ENCODE measurements at regions of chr19 and their contacts with region 1.

Region 1: DNA sequence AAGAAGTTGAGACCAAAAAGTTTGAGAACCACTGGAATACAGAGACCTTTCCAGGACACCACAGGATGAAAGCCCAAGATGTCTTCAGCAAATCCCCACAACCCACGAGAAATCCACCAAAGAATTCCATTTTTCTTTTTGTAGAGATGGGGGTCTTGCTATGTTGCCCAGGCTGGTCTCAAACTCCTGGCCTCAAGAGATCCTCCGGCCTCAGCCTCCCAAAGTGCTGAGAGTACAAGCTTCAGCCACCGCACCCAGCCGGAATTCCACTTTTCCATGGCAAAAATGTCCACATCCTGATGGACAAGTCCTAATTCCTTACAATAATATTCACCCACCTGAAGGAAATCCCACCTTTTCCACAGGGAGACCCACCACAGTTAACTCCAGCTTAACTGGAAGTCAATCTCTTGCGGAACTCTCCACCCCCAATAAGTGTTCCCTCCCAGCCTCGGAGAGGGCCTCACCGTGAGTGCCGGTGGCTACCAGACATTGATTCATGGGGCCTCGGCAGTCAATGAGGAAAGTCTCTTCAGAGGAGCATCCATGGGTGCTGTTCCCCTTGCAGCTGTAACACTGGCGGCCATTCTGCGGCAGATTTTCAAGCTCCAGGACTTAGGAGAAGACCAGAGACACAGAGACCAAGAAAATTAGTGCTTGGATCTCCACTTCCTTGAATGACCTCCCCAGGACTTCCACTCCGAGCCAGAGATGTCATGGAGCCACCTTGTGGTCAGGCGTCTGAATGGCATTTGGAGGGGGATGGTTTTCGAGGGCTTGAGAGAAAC is 12.3 kb upstream of the CADM4 start:
- DNase-seq: peak; percentile 80 to 84
- ATAC-seq: peak; percentile 82 to 91
- H3K4me3 ChIP-seq: no peak overlapping the region
- H3K27ac ChIP-seq: no peak overlapping the region
- H3K4me1 ChIP-seq: no peaks in the 10 kb centered on the region
- CTCF ChIP-seq: peak; percentile 78
- EP300 ChIP-seq: no peak
- POLR2A ChIP-seq: no peak
- RAD21 ChIP-seq: peak; percentile 73 to 81

Region 2: DNA sequence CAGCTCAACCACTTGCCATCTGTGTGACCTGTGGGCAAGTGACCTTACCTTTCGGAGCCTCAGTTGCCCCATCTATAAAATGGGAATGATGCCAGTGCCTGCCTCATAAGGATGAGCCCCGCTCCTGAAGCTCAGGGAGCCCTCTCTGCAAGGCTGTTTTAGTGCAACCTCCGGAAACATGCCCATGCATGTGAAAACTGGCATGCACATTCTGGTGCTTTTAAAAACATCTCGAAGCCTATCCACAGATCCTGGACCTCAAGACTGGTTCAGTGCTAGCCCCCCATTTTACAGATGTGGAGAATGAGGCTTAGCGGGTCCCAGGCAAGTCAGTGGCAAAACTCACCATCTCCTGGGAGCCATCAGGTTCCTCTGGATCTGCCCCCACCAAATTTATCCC is 17.9 kb before region 1 on chr19:
- CTCF ChIA-PET with region 1: interaction called, 11 read pairs
- POLR2A ChIA-PET with region 1: interaction called, 6 read pairs
- DNase-seq: no peak
- ATAC-seq: no peak
- H3K4me3 ChIP-seq: no peak overlapping the region
- H3K27ac ChIP-seq: peak overlapping the region in 1 of 2 experiments; percentile 68; a peak in 2 of 6 replicates
- H3K4me1 ChIP-seq: peaks cover 24% of the 10 kb centered on the region
- CTCF ChIP-seq: no peak
- EP300 ChIP-seq: no peak
- POLR2A ChIP-seq: no peak
- RAD21 ChIP-seq: no peak

Region 3: DNA sequence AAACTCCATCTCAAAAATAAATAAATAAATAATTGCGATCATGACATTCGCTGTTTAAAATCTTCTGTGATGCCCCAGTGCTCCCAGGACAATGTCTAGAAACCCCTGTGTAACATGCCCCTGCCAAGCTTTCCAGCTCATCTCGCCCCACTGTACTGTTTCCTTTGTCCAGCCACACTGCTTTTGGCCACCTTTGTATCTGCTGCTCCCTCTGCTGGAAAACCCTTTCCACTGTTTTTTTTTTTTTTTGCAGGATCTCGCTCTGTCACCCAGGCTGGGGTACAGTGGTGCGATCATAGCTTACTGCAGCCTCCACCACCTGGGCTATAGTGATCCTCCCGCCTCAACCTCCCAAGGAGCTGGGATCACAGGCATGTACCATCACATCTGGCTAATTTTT is 10.5 kb after region 1 on chr19:
- CTCF ChIA-PET with region 1: interaction called, 22 read pairs
- POLR2A ChIA-PET with region 1: no interaction called
- DNase-seq: no peak
- ATAC-seq: peak in 1 of 2 experiments; percentile 75; a peak in 4 of 6 replicates
- H3K4me3 ChIP-seq: no peak overlapping the region
- H3K27ac ChIP-seq: no peak overlapping the region
- H3K4me1 ChIP-seq: no peaks in the 10 kb centered on the region
- CTCF ChIP-seq: peak; percentile 37
- EP300 ChIP-seq: no peak
- POLR2A ChIP-seq: no peak
- RAD21 ChIP-seq: peak in 1 of 2 experiments; percentile 43; a peak in 2 of 5 replicates

Region 4: DNA sequence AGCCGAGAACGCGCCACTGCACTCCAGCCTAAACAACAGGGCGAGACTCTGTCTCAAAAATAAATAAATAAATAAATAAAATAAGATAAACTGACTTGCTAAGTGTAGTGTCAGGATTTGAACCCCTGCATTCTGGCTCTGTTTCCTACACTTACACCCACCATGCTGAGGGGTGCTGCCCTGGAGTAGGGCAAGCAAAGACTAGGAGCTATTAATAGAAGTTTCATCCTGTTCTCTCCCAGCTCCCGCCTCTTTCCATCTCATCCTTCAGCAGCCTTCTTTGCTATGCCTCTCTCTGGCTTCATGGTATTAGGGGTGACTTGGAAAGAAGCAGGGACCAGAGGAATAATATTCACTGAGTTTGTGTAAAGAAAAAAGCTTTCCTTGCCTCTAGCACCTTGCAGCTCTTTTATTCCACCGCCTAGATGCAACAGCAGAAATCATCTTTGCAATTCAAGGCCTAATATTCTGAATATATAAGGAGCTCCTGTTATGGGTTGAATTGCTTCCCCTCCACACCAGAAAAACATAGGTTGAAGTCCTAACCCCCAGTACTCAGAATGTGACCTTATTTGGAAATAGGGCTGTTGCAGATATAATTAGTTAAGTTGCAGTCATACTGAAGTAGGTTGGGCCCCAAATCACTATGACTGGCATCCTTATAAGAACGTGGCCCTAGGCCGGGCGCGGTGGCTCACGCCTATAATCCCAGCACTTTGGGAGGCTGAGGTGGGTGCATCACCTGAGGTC is 26.7 kb after region 1 on chr19:
- CTCF ChIA-PET with region 1: no interaction called
- POLR2A ChIA-PET with region 1: no interaction called
- DNase-seq: no peak
- ATAC-seq: no peak
- H3K4me3 ChIP-seq: no peak overlapping the region
- H3K27ac ChIP-seq: no peak overlapping the region
- H3K4me1 ChIP-seq: peaks cover 19% of the 10 kb centered on the region
- CTCF ChIP-seq: no peak
- EP300 ChIP-seq: no peak
- POLR2A ChIP-seq: no peak
- RAD21 ChIP-seq: no peak

Measured in A549 (cell line).